ENCODE measurements at regions of chr19 and their contacts with region 1.

Region 1: GRCh38 chr19:3573884-3574637 is 1.3 kb downstream of the HMG20B start:
- DNase-seq: peak; percentile 45 to 98
- ATAC-seq: peak; percentile 28 to 65; a peak in 5 of 6 replicates
- H3K4me3 ChIP-seq: peak overlapping the region; percentile 89; the same call in 2 of the 3 replicates
- H3K27ac ChIP-seq: peak overlapping the region; percentile 62 to 92; a peak in 5 of 6 replicates
- H3K4me1 ChIP-seq: peaks cover 21% of the 10 kb centered on the region
- CTCF ChIP-seq: no peak
- EP300 ChIP-seq: no peak
- POLR2A ChIP-seq: no peak
- RAD21 ChIP-seq: no peak

Region 2: DNA sequence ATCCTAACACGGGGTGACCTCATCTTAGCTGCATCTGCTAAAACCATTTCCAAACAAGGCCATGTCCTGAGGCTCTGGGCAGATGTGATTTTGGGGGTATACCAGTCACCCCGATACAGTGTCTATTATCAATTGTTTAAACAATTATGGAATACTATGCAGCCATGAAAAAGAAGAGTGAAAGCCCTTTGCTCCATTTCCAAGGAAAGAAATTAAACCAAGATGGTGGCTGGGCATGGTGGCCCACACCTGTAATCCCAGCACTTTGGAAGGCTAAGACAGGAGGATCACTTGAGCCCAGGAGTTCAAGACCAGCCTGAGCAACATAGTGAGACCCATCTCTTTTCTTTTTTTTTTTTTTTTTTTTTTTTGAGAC is 34.3 kb before region 1 on chr19:
- CTCF ChIA-PET with region 1: interaction called, 100 read pairs
- POLR2A ChIA-PET with region 1: interaction called, 3 read pairs
- DNase-seq: no peak
- ATAC-seq: no peak
- H3K4me3 ChIP-seq: no peak overlapping the region
- H3K27ac ChIP-seq: no peak overlapping the region
- H3K4me1 ChIP-seq: no peaks in the 10 kb centered on the region
- CTCF ChIP-seq: no peak
- EP300 ChIP-seq: no peak
- POLR2A ChIP-seq: no peak
- RAD21 ChIP-seq: no peak

Region 3: DNA sequence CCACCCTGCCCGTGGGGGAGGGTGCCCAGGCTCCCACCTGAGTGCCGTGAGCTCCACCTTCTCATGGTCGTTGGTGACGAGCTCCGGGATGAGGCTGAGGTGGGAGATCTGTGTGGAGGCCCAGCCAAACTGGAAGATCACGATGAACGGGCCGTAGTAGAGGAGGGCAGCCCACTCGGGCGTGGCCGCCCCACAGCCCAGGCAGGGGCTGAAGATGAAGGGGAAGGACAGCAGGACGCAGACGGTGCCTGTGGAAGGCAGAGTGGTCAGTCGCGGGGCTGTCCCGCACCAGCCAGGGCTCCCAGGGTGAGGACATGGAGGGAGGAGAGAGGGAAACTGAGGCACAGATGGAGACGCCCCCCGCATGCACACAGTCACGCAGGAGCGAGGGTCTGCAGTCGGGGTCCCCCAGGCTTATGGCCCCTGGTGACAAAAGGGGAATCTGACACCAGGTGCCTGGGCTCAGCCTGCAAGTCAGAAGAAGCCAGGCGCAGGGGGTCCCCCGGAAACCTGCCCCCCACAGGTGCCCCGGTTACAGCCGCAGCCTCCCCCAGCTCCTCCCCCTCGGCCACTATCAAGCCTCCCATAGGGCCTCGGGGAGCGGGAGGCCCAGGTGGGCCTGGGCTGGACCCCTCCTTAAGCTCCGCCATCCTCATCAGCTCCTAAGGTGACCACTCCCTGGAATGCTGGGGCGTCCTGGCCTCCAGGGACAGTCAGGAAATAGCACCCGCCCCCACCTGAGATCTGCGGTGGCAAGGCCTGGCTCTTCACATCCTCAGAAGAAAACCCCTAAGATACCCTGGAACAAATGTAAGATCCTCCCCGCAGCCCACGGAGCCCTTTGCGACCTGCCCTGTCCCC is 22.9 kb before region 1 on chr19:
- CTCF ChIA-PET with region 1: interaction called, 100 read pairs
- POLR2A ChIA-PET with region 1: no interaction called
- DNase-seq: no peak
- ATAC-seq: no peak
- H3K4me3 ChIP-seq: no peak overlapping the region
- H3K27ac ChIP-seq: no peak overlapping the region
- H3K4me1 ChIP-seq: peaks cover 12% of the 10 kb centered on the region
- CTCF ChIP-seq: no peak
- EP300 ChIP-seq: no peak
- POLR2A ChIP-seq: no peak
- RAD21 ChIP-seq: no peak

Region 4: DNA sequence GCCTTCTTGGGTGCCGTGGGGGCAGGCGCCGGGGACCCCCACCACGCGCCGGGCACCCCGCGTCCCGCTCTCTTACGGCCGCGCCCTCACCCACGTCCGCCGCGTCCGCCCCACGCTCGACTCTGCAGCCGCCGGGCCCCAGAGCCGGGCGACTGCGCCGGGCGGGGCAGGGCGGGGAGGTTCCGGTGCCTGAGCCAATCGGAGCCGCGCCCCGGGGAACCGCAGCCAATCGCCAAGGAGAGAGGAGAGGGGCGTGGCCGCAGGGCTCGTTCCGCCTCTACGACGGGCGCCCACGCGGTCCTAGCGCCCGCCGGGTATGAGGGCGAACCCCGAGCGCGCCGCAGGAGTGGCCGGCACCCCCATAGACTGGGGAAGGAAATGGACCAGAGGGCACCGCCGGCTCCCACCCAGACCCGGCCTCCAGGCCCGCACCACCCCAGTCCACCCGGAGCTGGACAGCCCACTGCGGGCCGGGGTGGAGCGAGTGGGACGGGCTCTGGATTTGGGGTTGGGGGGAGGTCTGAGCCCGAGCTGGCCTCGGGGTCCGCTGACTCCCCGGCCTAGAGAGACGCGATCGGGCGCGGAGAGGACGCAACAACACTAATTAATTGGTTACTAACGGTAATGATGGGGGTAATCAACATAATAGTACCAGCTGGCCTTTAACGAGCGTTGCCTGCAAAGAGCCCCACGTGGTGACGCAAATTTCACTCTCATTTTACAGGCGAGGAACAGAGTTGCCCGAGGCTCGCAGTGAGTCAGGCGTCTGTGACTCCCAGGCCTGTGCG is 16.4 kb before region 1 on chr19 and contains the start of gene MFSD12:
- CTCF ChIA-PET with region 1: interaction called, 70 read pairs
- POLR2A ChIA-PET with region 1: interaction called, 14 read pairs
- DNase-seq: peak; percentile 92 to 93
- ATAC-seq: peak; percentile 92 to 94
- H3K4me3 ChIP-seq: peak within 1 kb of the TSS; percentile 87
- H3K27ac ChIP-seq: peak within 1 kb of the TSS; percentile 89 to 100
- H3K4me1 ChIP-seq: peaks cover 32% of the 10 kb centered on the region
- CTCF ChIP-seq: no peak
- EP300 ChIP-seq: 0 out of 5 replicates have a peak, but pooled peaks of 1 of the 2 experiments have one; percentile 21
- POLR2A ChIP-seq: peak; percentile 56
- RAD21 ChIP-seq: no peak; a peak in 1 of 5 replicates
- polyA plus RNA-seq, gene MFSD12: 52.5 and 54.9 TPM in 2 replicates

Region 5: DNA sequence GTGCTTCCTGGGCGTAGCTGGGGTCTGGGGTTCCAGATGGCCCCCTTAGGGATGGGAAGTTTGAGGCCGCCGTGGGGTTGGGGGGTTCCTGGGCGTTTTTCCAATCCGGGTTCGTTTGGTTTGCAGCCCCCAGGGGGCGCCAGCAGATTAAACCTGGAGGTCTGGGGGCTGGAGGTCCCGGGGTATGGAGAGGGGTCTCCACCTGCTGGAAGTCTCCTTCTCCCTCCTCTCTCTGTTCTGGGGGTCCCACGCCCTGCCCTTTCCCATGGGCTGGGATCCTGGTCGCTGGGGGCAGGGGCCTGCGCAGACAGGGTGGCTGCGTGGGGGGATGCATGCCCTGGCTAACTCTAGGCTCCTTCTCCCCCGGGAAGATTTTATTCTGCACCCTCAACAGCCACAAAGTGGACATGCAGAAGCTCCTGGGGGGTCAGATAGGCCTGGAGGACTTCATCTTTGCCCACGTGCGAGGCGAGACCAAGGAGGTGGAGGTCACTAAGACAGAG is 12.1 kb after region 1 on chr19:
- CTCF ChIA-PET with region 1: interaction called, 43 read pairs
- POLR2A ChIA-PET with region 1: interaction called, 6 read pairs
- DNase-seq: no peak
- ATAC-seq: peak in 1 of 2 experiments; percentile 51; a peak in 3 of 6 replicates
- H3K4me3 ChIP-seq: peak overlapping the region; percentile 34; the same call in 2 of the 3 replicates
- H3K27ac ChIP-seq: peak overlapping the region in 1 of 2 experiments; percentile 81; a peak in 3 of 6 replicates
- H3K4me1 ChIP-seq: peaks cover 11% of the 10 kb centered on the region; the same call in 1 of the 3 replicates
- CTCF ChIP-seq: peak; percentile 46
- EP300 ChIP-seq: no peak
- POLR2A ChIP-seq: no peak
- RAD21 ChIP-seq: peak; percentile 44 to 51; a peak in 3 of 5 replicates